IMR-90 (cell line): ENCODE measurements at regions of chr5 and their contacts with region 1.

Region 1: DNA sequence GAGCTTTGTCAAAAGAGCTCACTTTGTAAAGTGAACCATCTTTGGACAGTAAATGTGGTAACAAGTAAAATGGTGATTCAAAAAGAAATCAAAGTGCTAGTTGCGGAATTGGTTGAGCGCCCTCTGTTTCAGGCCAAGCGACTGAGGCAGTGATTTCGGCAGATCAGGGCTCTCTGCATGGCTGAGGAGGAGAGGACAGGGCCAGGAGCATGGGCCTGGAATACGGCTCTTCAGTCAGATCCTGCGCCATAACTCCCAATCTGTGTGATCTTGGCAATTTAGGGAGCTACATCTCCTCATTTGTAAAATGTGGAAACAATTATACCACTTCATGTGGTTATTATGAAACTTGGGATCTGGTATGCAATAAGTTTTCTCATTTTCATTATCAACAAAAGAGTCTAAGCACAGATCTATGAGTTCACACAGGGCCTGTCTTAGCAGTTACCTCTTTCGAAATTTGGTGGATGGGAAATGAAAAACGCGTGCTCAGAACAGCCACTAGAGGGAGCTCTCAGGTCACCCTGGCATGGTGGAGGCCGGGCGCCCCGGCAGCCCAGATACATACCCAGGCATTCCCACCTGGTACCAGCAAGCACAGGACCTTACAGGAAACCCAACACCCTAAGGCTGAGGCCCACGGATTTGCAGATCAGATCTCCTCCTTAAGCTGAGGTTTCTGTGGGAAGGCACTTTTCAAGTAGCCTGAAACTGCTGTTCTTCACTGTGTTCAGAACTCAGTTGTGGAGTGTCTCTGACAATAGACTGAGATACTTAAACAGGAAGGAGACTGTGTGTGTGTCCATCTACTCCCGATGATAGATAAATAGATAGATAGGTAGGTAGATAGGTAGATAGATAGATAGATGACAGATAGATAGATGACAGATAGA is 303.7 kb downstream of the RAB3C start:
- DNase-seq: peak; percentile 57
- ATAC-seq: peak; percentile 87
- H3K4me3 ChIP-seq: no peak overlapping the region
- H3K27ac ChIP-seq: no peak overlapping the region
- H3K4me1 ChIP-seq: peaks cover 7% of the 10 kb centered on the region; the same call in 1 of the 2 replicates
- H3K27me3 ChIP-seq: peaks cover 2% of the 10 kb centered on the region
- CTCF ChIP-seq: peak; percentile 86
- POLR2A ChIP-seq: no peak
- RAD21 ChIP-seq: peak; percentile 78

Region 2: DNA sequence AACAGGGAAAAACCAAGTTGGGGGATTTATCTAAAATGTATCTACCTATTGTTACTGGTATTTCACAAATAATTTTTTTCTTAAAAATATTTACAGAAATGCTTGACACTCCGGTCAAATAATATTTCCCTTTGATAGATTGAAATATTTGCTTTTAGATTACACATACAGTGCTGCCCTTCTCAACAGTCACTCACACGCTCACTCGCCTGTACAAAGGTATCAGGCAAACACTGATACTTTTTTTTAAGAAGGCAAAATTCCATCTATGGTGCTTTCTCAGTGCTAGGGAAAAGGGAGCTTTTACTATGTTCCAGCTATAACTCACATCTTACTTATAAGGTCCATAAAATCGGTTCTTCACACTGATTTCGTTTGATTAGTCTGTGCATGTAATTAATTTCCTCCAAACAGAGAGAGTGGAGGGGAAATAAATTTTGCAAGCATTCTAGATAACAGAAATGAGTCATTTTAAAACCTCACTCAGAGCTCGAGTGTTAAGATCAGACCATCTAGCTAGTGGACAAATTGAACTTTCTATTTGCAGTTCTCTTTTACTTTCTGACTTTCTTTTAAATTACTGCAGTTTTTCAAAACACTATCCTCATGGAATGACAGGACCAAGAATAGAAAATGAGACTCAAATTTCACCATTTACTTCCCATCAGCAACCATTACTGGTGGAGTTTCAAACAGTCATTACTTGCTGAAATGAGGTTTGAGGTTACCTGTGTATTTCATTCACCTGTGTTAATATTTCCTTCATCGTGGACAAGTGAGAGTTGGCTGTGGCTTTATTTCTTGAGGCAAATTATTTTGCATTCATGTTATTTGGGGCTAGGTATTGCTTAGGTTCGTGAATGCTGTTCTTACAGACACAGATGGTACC is 30.5 kb before region 1 on chr5:
- CTCF ChIA-PET with region 1: no interaction called
- POLR2A ChIA-PET with region 1: no interaction called
- dilution Hi-C with region 1: no loop called
- in situ Hi-C with region 1: no loop called
- intact Hi-C with region 1: no loop called
- DNase-seq: no peak
- ATAC-seq: no peak
- H3K4me3 ChIP-seq: no peak overlapping the region
- H3K27ac ChIP-seq: no peak overlapping the region
- H3K4me1 ChIP-seq: no peaks in the 10 kb centered on the region
- H3K27me3 ChIP-seq: peaks cover 8% of the 10 kb centered on the region
- CTCF ChIP-seq: no peak
- POLR2A ChIP-seq: no peak
- RAD21 ChIP-seq: no peak

Region 3: GRCh38 chr5:59007460-59008063 is 121.0 kb after region 1 on chr5:
- CTCF ChIA-PET with region 1: interaction called, 5 read pairs
- POLR2A ChIA-PET with region 1: no interaction called
- dilution Hi-C with region 1: no loop called
- in situ Hi-C with region 1: loop called (anchors 10 kb)
- intact Hi-C with region 1: loop called (anchors 1 kb)
- DNase-seq: peak; percentile 39
- ATAC-seq: no peak; the same call in 1 of the 2 replicates
- H3K4me3 ChIP-seq: no peak overlapping the region
- H3K27ac ChIP-seq: no peak overlapping the region
- H3K4me1 ChIP-seq: peaks cover 3% of the 10 kb centered on the region; the same call in 1 of the 2 replicates
- H3K27me3 ChIP-seq: no peaks in the 10 kb centered on the region
- CTCF ChIP-seq: peak; percentile 48
- POLR2A ChIP-seq: no peak
- RAD21 ChIP-seq: peak; percentile 50

Region 4: DNA sequence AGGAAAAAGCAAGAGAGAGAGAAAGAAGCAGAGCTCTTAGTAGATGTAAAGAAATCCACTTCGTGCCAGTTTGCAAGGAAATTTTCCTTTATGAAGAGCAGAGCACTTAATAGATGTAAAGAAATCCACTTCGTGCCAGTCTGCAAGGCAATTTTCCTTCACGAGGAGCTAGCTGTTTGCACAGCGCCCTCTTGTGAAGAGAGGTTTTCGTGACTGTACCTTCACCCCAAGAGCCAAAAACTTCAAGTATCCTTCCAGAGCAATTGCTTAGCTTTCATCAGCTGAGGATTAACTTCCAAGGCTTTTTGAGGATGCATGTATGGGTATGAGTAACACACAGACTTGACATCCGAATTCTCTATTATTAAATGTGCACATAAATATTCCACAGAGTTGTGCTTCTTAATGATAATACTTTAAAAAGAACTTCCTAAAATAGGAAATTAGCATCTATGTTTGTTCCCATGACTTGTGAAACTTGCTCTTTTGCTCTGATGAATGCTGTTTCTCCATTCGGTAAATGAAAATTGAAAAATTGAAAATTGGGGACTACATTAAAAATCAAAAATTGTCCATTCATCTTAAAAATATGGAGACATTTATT is 481.3 kb after region 1 on chr5:
- CTCF ChIA-PET with region 1: no interaction called
- POLR2A ChIA-PET with region 1: no interaction called
- dilution Hi-C with region 1: no loop called
- in situ Hi-C with region 1: loop called (anchors 25 kb)
- intact Hi-C with region 1: loop called (anchors 5 kb)
- DNase-seq: peak; percentile 66
- ATAC-seq: peak; percentile 70
- H3K4me3 ChIP-seq: no peak overlapping the region
- H3K27ac ChIP-seq: no peak overlapping the region
- H3K4me1 ChIP-seq: no peaks in the 10 kb centered on the region
- H3K27me3 ChIP-seq: peaks cover 15% of the 10 kb centered on the region
- CTCF ChIP-seq: peak; percentile 74
- POLR2A ChIP-seq: no peak
- RAD21 ChIP-seq: peak; percentile 68

Region 5: DNA sequence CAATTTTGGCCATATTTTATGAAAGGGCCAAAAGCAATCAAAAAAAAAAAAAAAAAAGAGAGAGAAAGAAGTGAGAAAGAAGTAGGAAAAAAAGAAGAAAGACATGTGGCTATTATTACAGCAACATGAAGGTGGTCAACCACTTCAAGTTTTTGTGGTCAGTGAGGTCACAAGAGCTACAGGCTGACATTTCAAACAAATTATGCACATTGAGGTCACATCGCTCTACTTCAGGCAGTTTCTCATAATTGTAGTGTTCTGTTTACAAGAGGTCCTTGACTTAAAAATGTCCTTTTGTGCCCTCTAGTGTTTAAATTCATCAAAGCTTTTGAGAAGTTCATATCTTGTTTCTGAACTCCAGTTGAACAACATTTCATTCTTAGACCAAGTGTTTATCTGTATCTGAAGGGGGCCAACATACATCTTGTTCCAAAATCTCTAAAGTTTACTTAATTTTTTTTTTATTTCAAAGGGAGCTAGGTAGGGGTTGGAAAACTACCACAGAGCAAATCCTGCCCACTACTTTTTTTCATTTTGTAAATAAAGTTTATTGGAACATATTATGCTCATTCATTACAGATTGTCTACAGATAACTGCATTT is 493.9 kb after region 1 on chr5:
- CTCF ChIA-PET with region 1: no interaction called
- POLR2A ChIA-PET with region 1: no interaction called
- dilution Hi-C with region 1: no loop called
- in situ Hi-C with region 1: no loop called
- intact Hi-C with region 1: loop called (anchors 2 kb)
- DNase-seq: peak; percentile 71
- ATAC-seq: peak; percentile 77
- H3K4me3 ChIP-seq: no peak overlapping the region
- H3K27ac ChIP-seq: no peak overlapping the region
- H3K4me1 ChIP-seq: no peaks in the 10 kb centered on the region
- H3K27me3 ChIP-seq: no peaks in the 10 kb centered on the region; the same call in 1 of the 2 replicates
- CTCF ChIP-seq: peak; percentile 51
- POLR2A ChIP-seq: no peak
- RAD21 ChIP-seq: peak; percentile 52